Activated CD4-positive, alpha-beta T cell treated with anti-CD3 and anti-CD28 coated beads for 36 hours (primary cell): ENCODE measurements at regions of chr3 and their contacts with region 1.

Region 1: GRCh38 chr3:108914774-108915641 is 38.7 kb downstream of the GUCA1C start:
- DNase-seq: peak; percentile 75
- ATAC-seq: peak; percentile 97
- H3K4me3 Mint-ChIP-seq: peak overlapping the region; percentile 13
- H3K27ac Mint-ChIP-seq: peak overlapping the region; percentile 0
- H3K4me1 Mint-ChIP-seq: peaks cover 14% of the 10 kb centered on the region
- H3K27me3 Mint-ChIP-seq: peaks cover 6% of the 10 kb centered on the region

Region 2: GRCh38 chr3:108404368-108404767 is 510.6 kb before region 1 on chr3:
- CTCF ChIA-PET with region 1: no interaction called
- POLR2A ChIA-PET with region 1: no interaction called
- intact Hi-C with region 1: no loop called
- DNase-seq: no peak
- ATAC-seq: no peak
- H3K4me3 Mint-ChIP-seq: no peak overlapping the region
- H3K27ac Mint-ChIP-seq: no peak overlapping the region
- H3K4me1 Mint-ChIP-seq: peaks cover 10% of the 10 kb centered on the region
- H3K27me3 Mint-ChIP-seq: no peaks in the 10 kb centered on the region

Region 3: DNA sequence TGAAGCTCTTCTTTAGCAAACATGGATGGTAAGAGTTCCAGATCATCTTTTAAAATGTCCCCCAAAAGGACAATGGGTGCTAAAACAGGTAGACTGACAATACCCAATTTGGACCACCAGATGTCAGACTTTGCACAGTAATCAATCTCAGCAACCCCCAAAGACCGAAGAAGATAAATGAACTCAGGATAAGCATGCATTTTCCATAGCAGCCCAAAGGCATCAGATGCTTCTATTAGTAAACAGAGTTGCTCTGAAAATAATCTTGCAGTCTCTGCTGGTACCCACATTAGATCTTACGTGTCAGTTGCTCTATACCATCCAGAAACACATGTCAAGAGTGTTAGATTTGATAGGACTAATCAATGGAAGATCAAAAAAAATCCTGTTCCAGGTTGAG is 425.2 kb before region 1 on chr3:
- CTCF ChIA-PET with region 1: interaction called, 5 read pairs
- POLR2A ChIA-PET with region 1: no interaction called
- intact Hi-C with region 1: loop called (anchors 1 kb)
- DNase-seq: peak; percentile 37
- ATAC-seq: peak; percentile 73
- H3K4me3 Mint-ChIP-seq: no peak overlapping the region
- H3K27ac Mint-ChIP-seq: no peak overlapping the region
- H3K4me1 Mint-ChIP-seq: peaks cover 5% of the 10 kb centered on the region
- H3K27me3 Mint-ChIP-seq: no peaks in the 10 kb centered on the region

Region 4: DNA sequence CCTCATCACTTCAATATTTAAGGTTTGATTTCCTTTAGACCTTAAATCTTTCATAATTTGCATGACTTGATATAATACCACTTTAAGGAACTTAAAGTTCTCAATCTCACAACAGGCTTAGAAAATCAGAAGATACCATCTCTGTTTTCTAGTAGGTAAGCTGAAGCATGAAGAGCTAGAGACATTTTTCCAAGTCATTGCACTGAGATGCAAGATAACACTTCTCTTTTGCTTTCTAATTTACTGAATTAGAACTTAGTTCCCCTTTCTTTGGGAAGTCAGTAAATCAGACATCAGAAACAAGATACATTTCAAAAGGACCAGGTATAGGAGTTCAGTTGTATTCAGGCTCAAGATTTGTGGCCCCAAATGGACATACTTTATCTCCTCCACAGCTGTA is 245.8 kb before region 1 on chr3:
- CTCF ChIA-PET with region 1: interaction called, 18 read pairs
- POLR2A ChIA-PET with region 1: no interaction called
- intact Hi-C with region 1: no loop called
- DNase-seq: no peak
- ATAC-seq: no peak
- H3K4me3 Mint-ChIP-seq: no peak overlapping the region
- H3K27ac Mint-ChIP-seq: no peak overlapping the region
- H3K4me1 Mint-ChIP-seq: peaks cover 18% of the 10 kb centered on the region
- H3K27me3 Mint-ChIP-seq: no peaks in the 10 kb centered on the region

Region 5: DNA sequence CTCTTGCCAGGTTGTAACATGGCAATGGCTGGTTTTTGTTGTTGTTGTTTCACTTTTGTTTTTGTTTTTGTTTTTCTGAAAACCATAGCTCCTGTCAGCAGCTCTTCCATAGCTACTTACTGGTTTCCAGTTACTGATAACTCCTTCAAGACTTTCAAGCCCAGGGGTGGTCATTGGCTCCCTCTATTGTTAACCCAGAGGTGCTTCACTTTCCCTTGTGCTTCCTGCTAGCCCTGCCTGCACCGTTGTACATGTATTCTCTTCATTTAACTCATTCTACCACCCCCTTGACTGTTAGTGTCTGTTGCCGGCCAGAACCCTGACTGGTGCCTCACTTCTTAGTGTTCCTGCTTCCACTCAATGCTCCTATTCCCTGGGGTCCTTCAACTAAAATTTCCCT is 96.6 kb before region 1 on chr3:
- CTCF ChIA-PET with region 1: interaction called, 58 read pairs
- POLR2A ChIA-PET with region 1: no interaction called
- intact Hi-C with region 1: loop called (anchors 1 kb)
- DNase-seq: peak; percentile 76
- ATAC-seq: peak; percentile 90
- H3K4me3 Mint-ChIP-seq: peak overlapping the region; percentile 18
- H3K27ac Mint-ChIP-seq: peak overlapping the region; percentile 22
- H3K4me1 Mint-ChIP-seq: peaks cover 36% of the 10 kb centered on the region
- H3K27me3 Mint-ChIP-seq: no peaks in the 10 kb centered on the region

Region 6: DNA sequence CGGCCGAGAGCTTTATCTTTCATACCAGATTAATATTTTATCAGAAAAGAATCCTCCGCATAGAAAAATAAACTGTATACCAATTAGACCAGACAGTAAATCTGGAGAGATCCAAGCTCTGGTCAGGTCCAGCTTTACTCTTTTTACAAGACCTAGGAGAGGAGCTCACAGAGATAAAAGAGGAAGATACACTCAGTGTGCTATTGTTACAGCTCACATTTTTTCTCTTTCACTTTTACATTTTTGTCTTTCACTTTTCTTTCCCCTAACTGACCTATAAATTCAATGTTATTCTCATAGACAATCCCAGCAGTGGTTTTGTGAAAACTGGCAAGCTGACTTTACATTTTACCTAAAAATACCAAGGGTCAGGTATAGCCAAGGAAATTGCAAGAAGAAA is 17.1 kb before region 1 on chr3:
- CTCF ChIA-PET with region 1: interaction called, 13 read pairs
- POLR2A ChIA-PET with region 1: interaction called, 3 read pairs
- intact Hi-C with region 1: no loop called
- DNase-seq: no peak
- ATAC-seq: peak; percentile 74
- H3K4me3 Mint-ChIP-seq: no peak overlapping the region
- H3K27ac Mint-ChIP-seq: no peak overlapping the region
- H3K4me1 Mint-ChIP-seq: peaks cover 23% of the 10 kb centered on the region
- H3K27me3 Mint-ChIP-seq: no peaks in the 10 kb centered on the region